Activated naive CD4-positive, alpha-beta T cell treated with anti-CD3 and anti-CD28 coated beads for 36 hours (primary cell): ENCODE measurements at regions of chr7 and their contacts with region 1.

Region 1: GRCh38 chr7:8042796-8043535 is 74.4 kb downstream of the GLCCI1 start:
- DNase-seq: no peak
- H3K4me3 Mint-ChIP-seq: no peak overlapping the region
- H3K27ac Mint-ChIP-seq: peak overlapping the region; percentile 82
- H3K4me1 Mint-ChIP-seq: peaks cover 72% of the 10 kb centered on the region
- H3K27me3 Mint-ChIP-seq: no peaks in the 10 kb centered on the region

Region 2: DNA sequence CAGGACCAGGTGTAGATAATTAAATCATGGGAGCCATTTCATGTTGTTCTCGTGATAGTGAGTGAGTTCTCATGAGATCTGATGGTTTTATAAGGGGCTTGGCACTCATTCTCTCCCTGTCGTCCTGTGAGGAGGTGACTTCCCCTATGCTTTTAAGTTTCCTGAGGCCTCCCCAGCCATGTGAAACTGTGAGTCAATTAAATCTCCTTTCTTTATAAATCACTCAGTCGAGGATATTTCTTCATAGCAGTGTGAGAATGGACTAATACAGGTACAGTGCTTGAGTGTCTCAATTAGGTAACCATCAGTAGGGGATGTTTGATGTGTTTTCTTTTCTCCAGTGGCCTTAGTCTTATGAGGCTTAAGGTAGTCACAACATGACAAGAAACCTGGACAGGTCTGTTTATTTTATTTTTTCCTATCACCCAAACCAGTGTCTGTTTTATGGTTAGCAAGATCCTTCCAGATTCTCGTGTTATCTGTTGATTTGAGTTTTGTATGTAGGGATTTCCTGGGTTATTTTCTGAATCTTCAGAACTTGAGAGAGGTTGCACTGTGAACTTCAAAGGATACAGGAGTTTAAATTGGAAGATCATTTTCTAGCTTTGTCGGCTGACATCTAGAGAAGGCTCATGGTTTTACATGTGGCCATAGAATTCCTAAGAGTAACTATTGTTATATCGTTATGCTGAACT is 370.3 kb before region 1 on chr7:
- CTCF ChIA-PET with region 1: no interaction called
- intact Hi-C with region 1: loop called (anchors 2 kb)
- DNase-seq: peak; percentile 64
- H3K4me3 Mint-ChIP-seq: peak overlapping the region; percentile 31
- H3K27ac Mint-ChIP-seq: peak overlapping the region; percentile 79
- H3K4me1 Mint-ChIP-seq: peaks cover 45% of the 10 kb centered on the region
- H3K27me3 Mint-ChIP-seq: no peaks in the 10 kb centered on the region

Region 3: GRCh38 chr7:7920481-7920880 is 122.5 kb before region 1 on chr7:
- CTCF ChIA-PET with region 1: no interaction called
- intact Hi-C with region 1: loop called (anchors 2 kb)
- DNase-seq: peak; percentile 46
- H3K4me3 Mint-ChIP-seq: no peak overlapping the region
- H3K27ac Mint-ChIP-seq: no peak overlapping the region
- H3K4me1 Mint-ChIP-seq: peaks cover 24% of the 10 kb centered on the region
- H3K27me3 Mint-ChIP-seq: no peaks in the 10 kb centered on the region

Region 4: GRCh38 chr7:8015100-8015748 is 27.7 kb before region 1 on chr7:
- CTCF ChIA-PET with region 1: interaction called, 3 read pairs
- intact Hi-C with region 1: loop called (anchors 1 kb)
- DNase-seq: no peak
- H3K4me3 Mint-ChIP-seq: peak overlapping the region; percentile 4
- H3K27ac Mint-ChIP-seq: peak overlapping the region; percentile 68
- H3K4me1 Mint-ChIP-seq: peaks cover 47% of the 10 kb centered on the region
- H3K27me3 Mint-ChIP-seq: no peaks in the 10 kb centered on the region

Region 5: GRCh38 chr7:8125680-8126444 is 82.9 kb after region 1 on chr7:
- CTCF ChIA-PET with region 1: interaction called, 3 read pairs
- intact Hi-C with region 1: loop called (anchors 1 kb)
- DNase-seq: peak; percentile 86
- H3K4me3 Mint-ChIP-seq: peak overlapping the region; percentile 71
- H3K27ac Mint-ChIP-seq: peak overlapping the region; percentile 96
- H3K4me1 Mint-ChIP-seq: peaks cover 57% of the 10 kb centered on the region
- H3K27me3 Mint-ChIP-seq: no peaks in the 10 kb centered on the region

Region 6: GRCh38 chr7:8254667-8255066 is 211.7 kb after region 1 on chr7:
- CTCF ChIA-PET with region 1: no interaction called
- intact Hi-C with region 1: no loop called
- DNase-seq: no peak
- H3K4me3 Mint-ChIP-seq: no peak overlapping the region
- H3K27ac Mint-ChIP-seq: no peak overlapping the region
- H3K4me1 Mint-ChIP-seq: no peaks in the 10 kb centered on the region
- H3K27me3 Mint-ChIP-seq: peaks cover 10% of the 10 kb centered on the region

Region 7: GRCh38 chr7:8536431-8536830 is 493.5 kb after region 1 on chr7:
- CTCF ChIA-PET with region 1: no interaction called
- intact Hi-C with region 1: no loop called
- DNase-seq: no peak
- H3K4me3 Mint-ChIP-seq: no peak overlapping the region
- H3K27ac Mint-ChIP-seq: no peak overlapping the region
- H3K4me1 Mint-ChIP-seq: no peaks in the 10 kb centered on the region
- H3K27me3 Mint-ChIP-seq: no peaks in the 10 kb centered on the region